ENCODE measurements at regions of chr16 and their contacts with region 1.

Region 1: DNA sequence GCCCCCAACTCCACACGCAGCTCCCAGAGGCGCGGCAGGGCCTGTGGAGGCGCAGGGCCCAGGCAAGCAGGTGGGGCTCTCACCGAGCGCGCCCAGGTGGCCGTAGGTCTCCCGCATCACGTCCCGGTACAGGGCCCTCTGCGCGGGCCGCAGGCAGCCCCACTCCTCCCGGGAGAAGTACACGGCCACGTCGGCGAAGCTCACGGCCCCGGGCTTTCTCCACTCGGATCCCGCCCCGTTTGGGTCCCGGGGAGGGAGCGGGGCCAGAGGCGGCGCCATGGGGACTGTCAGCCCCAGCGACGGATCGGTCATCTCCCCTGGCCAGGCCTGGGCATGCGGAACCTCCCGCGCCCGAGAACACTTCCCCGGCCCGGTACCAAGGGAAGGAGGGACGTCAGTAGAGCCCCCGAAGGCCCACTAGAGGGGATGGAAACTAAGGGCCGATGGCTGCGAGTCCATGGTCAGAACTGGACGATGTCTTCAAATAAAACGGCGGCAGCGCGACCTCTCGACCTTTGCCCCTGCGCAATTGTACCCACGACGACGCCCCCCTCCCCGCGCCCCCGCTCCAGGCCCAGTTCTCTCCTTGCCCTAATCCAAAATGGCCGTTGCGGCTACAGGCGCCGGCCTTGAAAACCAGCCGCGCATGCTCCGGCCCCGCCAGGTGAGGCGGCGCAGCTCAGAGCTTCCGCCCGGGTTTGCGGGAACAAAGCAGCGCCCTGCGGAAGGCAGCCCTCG is at the start of gene ZNF747:
- DNase-seq: peak; percentile 93

Region 2: GRCh38 chr16:30445408-30446202 is 88.9 kb before region 1 on chr16 and contains the start of gene SEPHS2:
- CTCF ChIA-PET with region 1: interaction called, 6 read pairs
- POLR2A ChIA-PET with region 1: interaction called, 13 read pairs
- DNase-seq: peak; percentile 98

Region 3: GRCh38 chr16:30551781-30552180 is 17.2 kb after region 1 on chr16:
- CTCF ChIA-PET with region 1: interaction called, 19 read pairs
- POLR2A ChIA-PET with region 1: interaction called, 181 read pairs
- DNase-seq: no peak

Region 4: GRCh38 chr16:30571695-30572600 is 37.4 kb after region 1 on chr16 and contains the start of gene ZNF688:
- CTCF ChIA-PET with region 1: interaction called, 3 read pairs
- POLR2A ChIA-PET with region 1: interaction called, 49 read pairs
- DNase-seq: peak; percentile 96

Region 5: DNA sequence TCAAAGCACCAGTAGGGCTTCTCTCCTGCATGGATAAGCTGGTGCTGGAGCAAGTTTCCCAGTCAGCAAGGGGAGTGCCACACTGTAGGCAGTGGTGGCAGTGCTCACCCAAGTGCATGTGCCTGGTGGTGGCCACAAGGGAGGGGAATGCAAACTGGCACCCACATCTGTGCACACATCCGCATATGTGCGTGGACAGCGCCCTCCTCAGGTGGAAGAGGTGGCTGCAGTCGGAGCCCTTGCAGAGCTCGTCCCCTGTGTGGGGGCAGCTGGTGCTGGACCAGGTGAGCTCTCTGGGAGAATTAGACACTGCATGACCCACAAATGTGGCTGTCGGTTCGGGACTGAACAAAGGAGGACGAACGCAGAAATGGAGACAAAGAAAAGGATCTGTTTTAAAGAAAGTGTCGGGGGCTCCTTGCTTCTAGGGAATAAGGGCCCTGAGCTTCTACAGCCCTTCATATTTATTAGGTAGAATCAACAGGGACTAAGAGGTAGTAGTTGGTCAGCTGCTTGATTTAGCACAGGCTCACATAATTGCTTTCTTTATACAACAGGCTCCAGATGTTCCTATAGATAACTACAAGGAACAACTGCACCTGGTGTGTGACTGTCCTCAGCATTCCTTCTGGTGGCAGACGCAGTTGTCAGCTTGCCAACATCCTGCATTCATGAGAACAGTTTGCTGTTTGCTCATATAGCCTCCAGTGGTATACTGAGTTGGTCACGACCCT is 81.0 kb after region 1 on chr16:
- CTCF ChIA-PET with region 1: interaction called, 12 read pairs
- POLR2A ChIA-PET with region 1: interaction called, 44 read pairs
- DNase-seq: peak; percentile 83

Region 6: DNA sequence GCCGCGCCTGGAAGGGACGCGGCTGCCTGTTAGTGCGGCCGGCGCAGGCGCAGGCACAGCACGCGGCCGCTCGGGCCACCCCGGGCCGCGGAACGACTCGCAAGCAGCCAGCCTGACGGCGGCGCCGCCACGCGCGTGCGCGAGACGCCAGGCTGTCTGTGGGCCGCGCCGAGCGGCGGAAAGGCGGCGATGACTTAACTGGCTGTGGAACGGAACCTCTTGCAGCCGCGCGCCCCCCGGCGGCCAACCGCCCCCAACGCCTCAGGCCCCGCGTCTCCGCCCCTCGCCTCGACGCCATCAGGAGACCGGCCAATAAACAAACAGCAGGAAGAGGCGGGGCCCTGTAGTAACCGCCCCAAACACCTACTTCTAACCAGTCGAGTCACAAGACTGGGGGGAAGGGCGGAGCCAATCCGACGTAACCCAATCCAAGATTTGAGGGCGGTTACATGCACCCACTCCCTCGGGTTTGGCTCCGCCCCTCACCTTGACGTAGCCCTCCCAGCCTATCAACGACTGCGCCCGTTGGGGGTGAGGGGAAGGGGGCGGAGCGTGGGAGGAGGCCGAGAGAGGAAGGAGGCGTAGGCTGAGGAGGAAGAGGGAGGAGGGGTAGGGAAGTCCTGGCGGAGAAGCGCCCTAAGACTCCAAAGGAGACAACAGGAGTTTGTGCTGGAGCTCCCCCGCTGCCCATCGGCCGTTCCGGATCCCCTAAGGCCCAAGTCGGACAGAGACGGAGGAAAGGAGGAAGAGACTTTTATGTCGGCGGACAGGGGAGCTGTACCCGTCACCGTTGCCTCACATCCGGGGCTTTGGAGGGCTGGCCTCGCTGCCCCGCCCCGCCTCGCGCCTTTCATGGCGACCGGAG is 123.6 kb after region 1 on chr16 and contains the start of gene FBRS:
- CTCF ChIA-PET with region 1: no interaction called
- POLR2A ChIA-PET with region 1: interaction called, 12 read pairs
- DNase-seq: peak; percentile 100